ENCODE measurements at regions of chr5 and their contacts with region 1.

Region 1: DNA sequence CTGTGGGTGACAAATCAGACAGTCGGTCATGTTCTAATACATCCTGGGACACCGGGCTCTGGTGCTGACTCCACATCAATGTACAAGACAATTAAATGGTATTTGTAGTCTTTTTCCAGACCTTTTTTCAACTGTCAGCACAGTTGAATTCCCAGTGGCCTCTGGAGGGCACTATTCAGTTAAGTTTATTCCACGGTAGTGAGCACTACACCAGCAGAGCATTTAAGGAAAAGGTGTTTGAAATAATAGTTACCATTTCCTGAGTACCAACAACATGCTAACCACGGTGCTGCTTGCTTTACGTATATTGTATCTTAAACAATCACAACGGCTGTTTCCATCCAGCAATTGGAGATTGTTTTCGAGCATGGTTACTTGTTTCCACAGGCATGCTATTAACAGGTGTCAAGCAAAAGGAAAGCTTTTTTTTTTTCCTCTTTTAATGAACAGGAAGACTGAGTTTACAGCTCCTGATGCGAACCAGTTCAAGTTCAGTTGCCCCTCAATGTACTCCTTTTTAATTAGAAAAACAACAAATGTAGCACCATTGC is 186.7 kb downstream of the PDZD2 start:
- DNase-seq: peak; percentile 56
- H3K4me3 ChIP-seq: no peak overlapping the region
- H3K27ac ChIP-seq: no peak overlapping the region
- H3K4me1 ChIP-seq: peaks cover 0 to 7% of the 10 kb centered on the region in 2 experiments; a peak in 1 of 4 replicates
- H3K27me3 ChIP-seq: no peaks in the 10 kb centered on the region; the same call in 1 of the 2 replicates
- CTCF ChIP-seq: peak; percentile 75
- EP300 ChIP-seq: no peak
- RAD21 ChIP-seq: peak; percentile 93

Region 2: GRCh38 chr5:31809050-31809870 is 16.3 kb before region 1 on chr5:
- CTCF ChIA-PET with region 1: interaction called, 35 read pairs
- POLR2A ChIA-PET with region 1: no interaction called
- DNase-seq: peak; percentile 82
- H3K4me3 ChIP-seq: no peak overlapping the region
- H3K27ac ChIP-seq: no peak overlapping the region
- H3K4me1 ChIP-seq: peaks cover 0 to 13% of the 10 kb centered on the region in 2 experiments; a peak in 1 of 4 replicates
- H3K27me3 ChIP-seq: peaks cover 5% of the 10 kb centered on the region; the same call in 1 of the 2 replicates
- CTCF ChIP-seq: peak; percentile 65
- EP300 ChIP-seq: no peak
- RAD21 ChIP-seq: peak; percentile 98

Region 3: GRCh38 chr5:31844615-31845353 is 19.2 kb after region 1 on chr5:
- CTCF ChIA-PET with region 1: interaction called, 11 read pairs
- POLR2A ChIA-PET with region 1: no interaction called
- DNase-seq: no peak
- H3K4me3 ChIP-seq: no peak overlapping the region
- H3K27ac ChIP-seq: no peak overlapping the region
- H3K4me1 ChIP-seq: peaks cover 0 to 15% of the 10 kb centered on the region in 2 experiments; a peak in 2 of 4 replicates
- H3K27me3 ChIP-seq: no peaks in the 10 kb centered on the region; the same call in 1 of the 2 replicates
- CTCF ChIP-seq: no peak
- EP300 ChIP-seq: no peak
- RAD21 ChIP-seq: no peak

Region 4: GRCh38 chr5:31921852-31922305 is 96.3 kb after region 1 on chr5:
- CTCF ChIA-PET with region 1: interaction called, 11 read pairs
- POLR2A ChIA-PET with region 1: no interaction called
- DNase-seq: no peak
- H3K4me3 ChIP-seq: no peak overlapping the region
- H3K27ac ChIP-seq: no peak overlapping the region
- H3K4me1 ChIP-seq: peaks cover 0 to 6% of the 10 kb centered on the region in 2 experiments; a peak in 1 of 4 replicates
- H3K27me3 ChIP-seq: no peaks in the 10 kb centered on the region; the same call in 1 of the 2 replicates
- CTCF ChIP-seq: no peak
- EP300 ChIP-seq: no peak
- RAD21 ChIP-seq: no peak

Region 5: GRCh38 chr5:32066448-32066847 is 240.9 kb after region 1 on chr5:
- CTCF ChIA-PET with region 1: interaction called, 13 read pairs
- POLR2A ChIA-PET with region 1: no interaction called
- DNase-seq: no peak
- H3K4me3 ChIP-seq: no peak overlapping the region
- H3K27ac ChIP-seq: no peak overlapping the region
- H3K4me1 ChIP-seq: no peaks in the 10 kb centered on the region
- H3K27me3 ChIP-seq: no peaks in the 10 kb centered on the region; the same call in 1 of the 2 replicates
- CTCF ChIP-seq: no peak
- EP300 ChIP-seq: no peak
- RAD21 ChIP-seq: no peak

Region 6: DNA sequence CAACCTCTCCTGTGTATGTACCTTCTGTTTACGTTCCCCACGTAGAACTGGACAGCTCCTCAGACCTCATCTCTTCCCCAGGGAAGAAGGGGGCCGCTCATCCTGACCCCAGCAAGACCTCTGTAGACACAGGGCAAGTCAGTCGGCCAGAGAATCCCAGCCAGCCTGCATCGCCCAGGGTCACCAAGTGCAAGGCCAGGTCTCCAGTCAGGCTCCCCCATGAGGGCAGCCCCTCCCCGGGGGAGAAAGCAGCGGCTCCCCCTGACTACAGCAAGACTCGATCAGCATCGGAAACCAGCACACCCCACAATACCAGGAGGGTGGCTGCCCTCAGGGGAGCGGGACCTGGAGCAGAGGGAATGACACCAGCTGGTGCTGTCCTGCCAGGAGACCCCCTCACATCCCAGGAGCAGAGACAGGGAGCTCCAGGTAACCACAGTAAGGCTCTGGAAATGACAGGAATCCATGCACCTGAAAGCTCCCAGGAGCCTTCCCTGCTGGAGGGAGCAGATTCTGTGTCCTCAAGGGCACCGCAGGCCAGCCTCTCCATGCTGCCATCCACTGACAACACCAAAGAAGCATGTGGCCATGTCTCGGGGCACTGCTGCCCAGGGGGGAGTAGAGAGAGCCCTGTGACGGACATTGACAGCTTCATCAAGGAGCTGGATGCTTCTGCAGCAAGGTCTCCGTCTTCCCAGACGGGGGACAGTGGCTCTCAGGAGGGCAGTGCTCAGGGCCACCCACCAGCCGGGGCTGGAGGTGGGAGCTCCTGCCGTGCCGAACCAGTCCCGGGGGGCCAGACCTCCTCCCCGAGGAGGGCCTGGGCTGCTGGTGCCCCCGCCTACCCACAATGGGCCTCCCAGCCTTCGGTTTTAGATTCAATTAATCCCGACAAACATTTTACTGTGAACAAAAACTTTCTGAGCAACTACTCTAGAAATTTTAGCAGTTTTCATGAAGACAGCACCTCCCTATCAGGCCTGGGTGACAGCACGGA is 261.8 kb after region 1 on chr5:
- CTCF ChIA-PET with region 1: interaction called, 58 read pairs
- POLR2A ChIA-PET with region 1: no interaction called
- DNase-seq: no peak
- H3K4me3 ChIP-seq: no peak overlapping the region
- H3K27ac ChIP-seq: no peak overlapping the region
- H3K4me1 ChIP-seq: no peaks in the 10 kb centered on the region
- H3K27me3 ChIP-seq: no peaks in the 10 kb centered on the region
- CTCF ChIP-seq: no peak
- EP300 ChIP-seq: no peak
- RAD21 ChIP-seq: no peak

Region 7: DNA sequence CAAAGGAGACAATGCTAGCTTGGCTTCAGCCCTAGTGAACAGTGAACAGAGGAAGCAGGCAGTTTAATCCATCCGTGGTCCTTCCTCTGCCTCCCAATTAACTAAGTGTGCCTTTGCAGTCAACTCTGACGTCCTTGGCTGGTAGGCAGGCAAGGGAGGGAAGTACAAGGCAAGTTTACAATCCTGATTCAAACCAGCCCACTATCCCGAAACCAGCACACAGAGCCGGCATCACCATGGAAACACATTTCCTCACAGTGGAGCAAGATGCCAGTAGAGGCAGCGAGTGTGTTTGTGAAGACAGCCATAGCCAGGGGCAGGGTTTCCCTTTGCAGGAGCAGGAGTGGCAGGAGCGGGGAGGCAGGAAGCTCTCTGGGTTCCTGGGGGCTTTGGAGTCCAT is 274.6 kb after region 1 on chr5:
- CTCF ChIA-PET with region 1: interaction called, 58 read pairs
- POLR2A ChIA-PET with region 1: no interaction called
- DNase-seq: peak; percentile 56
- H3K4me3 ChIP-seq: no peak overlapping the region
- H3K27ac ChIP-seq: peak overlapping the region in 1 of 2 experiments; percentile 53; a peak in 2 of 4 replicates
- H3K4me1 ChIP-seq: peaks cover 0 to 28% of the 10 kb centered on the region in 2 experiments; a peak in 1 of 4 replicates
- H3K27me3 ChIP-seq: no peaks in the 10 kb centered on the region
- CTCF ChIP-seq: no peak
- EP300 ChIP-seq: no peak
- RAD21 ChIP-seq: no peak